HepG2 (cell line): ENCODE measurements at regions of chr15 and their contacts with region 1.

Region 1: DNA sequence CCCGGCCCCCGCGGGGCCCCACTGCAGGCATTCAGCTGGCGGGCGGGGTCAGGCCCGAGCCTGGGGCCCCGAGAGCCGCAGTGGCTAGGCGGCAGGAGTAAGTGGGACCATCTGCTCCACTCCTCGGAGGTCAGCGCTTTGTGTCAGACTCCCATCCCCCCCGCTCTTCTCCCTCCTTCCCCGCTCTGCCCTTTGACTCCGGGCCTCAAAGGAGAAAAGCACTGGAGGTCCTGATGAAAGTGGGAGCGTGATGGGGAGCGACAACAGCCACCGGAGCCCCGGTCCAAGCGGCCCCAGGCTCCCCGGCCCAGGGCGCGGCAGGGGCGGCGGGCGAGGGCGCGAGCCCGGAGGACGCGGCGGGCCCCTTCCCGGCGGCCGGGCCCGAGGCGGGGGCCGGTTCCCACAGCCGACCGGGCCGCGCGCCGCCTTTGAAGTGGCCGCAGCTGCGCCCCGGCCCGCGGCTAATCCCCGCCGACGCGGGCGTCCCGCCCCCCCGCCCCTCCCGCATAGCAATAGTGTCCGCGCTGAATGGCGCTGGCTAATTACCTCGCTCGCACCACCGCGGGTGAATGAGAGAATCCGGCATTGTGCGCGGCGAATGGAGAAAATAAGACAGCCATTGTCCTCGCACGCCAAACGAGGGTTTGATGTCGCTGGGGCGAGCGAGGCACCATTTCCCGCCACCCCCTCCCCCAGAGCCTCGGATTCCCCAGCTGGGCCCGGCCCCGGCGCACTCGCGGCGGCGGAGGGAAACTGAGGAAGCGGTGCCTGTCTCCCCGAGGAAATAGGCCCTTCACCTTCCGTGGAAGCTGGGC is 22.4 kb downstream of the IGDCC3 start:
- DNase-seq: peak; percentile 29
- ATAC-seq: peak; percentile 81
- H3K4me3 ChIP-seq: peak overlapping the region; percentile 56 to 75 (median 57)
- H3K27ac ChIP-seq: peak overlapping the region; percentile 62
- H3K4me1 ChIP-seq: peaks cover 21% of the 10 kb centered on the region
- H3K27me3 ChIP-seq: no peaks in the 10 kb centered on the region
- CTCF ChIP-seq: no peak
- EP300 ChIP-seq: no peak
- POLR2A ChIP-seq: no peak
- RAD21 ChIP-seq: no peak

Region 2: GRCh38 chr15:65264863-65265430 is 90.4 kb before region 1 on chr15:
- CTCF ChIA-PET with region 1: no interaction called
- POLR2A ChIA-PET with region 1: no interaction called
- in situ Hi-C with region 1: no loop called
- intact Hi-C with region 1: no loop called
- DNase-seq: no peak
- ATAC-seq: no peak
- H3K4me3 ChIP-seq: no peak overlapping the region
- H3K27ac ChIP-seq: no peak overlapping the region
- H3K4me1 ChIP-seq: no peaks in the 10 kb centered on the region
- H3K27me3 ChIP-seq: no peaks in the 10 kb centered on the region
- CTCF ChIP-seq: no peak
- EP300 ChIP-seq: no peak
- POLR2A ChIP-seq: no peak
- RAD21 ChIP-seq: no peak

Region 3: DNA sequence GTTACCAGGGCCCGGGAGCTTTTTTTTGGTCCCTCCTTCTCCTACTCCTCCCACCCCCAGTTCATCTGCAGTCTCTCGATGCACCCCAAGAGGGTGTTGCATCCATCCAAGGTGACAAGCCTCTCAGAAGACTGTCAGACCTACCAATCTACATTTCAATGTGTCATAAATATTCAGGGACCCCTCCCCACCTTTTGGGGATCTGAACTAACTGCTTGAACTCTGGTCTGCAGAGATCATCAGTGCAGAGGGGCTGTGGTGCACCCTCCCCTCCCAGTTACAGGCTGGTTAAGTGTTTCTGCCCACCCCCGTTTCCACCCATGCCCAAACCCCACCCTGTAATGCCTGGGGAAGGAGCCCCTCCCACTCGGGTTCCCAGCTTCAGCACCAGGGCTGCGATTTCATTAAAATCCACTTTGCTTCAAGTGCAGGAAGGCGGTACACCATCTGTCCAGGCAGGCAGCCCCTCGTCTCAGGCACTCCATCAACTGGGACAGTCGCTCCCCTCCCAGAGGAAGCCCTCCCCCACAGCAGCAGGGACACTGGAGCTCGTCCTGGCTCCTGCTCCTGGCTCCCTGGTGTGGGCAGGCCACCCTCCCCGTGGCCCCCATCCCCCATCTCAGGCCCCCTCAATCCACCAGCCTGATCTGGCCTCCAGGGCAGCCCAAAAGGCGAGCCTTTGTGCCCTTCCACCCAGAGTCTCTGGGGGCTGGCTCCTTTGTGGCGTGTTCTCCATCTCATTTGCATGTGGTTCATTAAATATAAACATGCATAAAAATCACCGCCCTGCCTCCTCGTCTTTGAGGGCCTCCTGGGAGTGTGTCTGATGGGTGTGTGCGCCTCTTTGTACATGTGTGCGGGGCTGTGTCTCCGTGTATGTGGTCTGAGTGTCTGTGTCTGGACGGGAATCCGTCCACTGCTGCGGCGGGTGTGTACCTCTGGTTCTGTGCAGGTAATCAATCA is 18.6 kb before region 1 on chr15:
- CTCF ChIA-PET with region 1: no interaction called
- POLR2A ChIA-PET with region 1: no interaction called
- in situ Hi-C with region 1: no loop called
- intact Hi-C with region 1: no loop called
- DNase-seq: no peak
- ATAC-seq: no peak
- H3K4me3 ChIP-seq: no peak overlapping the region
- H3K27ac ChIP-seq: no peak overlapping the region
- H3K4me1 ChIP-seq: peaks cover 18% of the 10 kb centered on the region
- H3K27me3 ChIP-seq: no peaks in the 10 kb centered on the region
- CTCF ChIP-seq: no peak
- EP300 ChIP-seq: no peak
- POLR2A ChIP-seq: no peak
- RAD21 ChIP-seq: no peak

Region 4: GRCh38 chr15:65377104-65377975 is 22.0 kb after region 1 on chr15:
- CTCF ChIA-PET with region 1: no interaction called
- POLR2A ChIA-PET with region 1: interaction called, 12 read pairs
- in situ Hi-C with region 1: no loop called
- intact Hi-C with region 1: loop called (anchors 2 kb)
- DNase-seq: no peak
- ATAC-seq: peak; percentile 65
- H3K4me3 ChIP-seq: peak overlapping the region; percentile 84 to 97 (median 92)
- H3K27ac ChIP-seq: peak overlapping the region; percentile 99
- H3K4me1 ChIP-seq: peaks cover 66% of the 10 kb centered on the region
- H3K27me3 ChIP-seq: no peaks in the 10 kb centered on the region; a peak in 1 of 5 replicates
- CTCF ChIP-seq: peak; percentile 7; the same call in 1 of the 2 replicates
- EP300 ChIP-seq: no peak
- POLR2A ChIP-seq: peak in 1 of 2 experiments; percentile 16; a peak in 1 of 4 replicates
- RAD21 ChIP-seq: no peak; the same call in 1 of the 2 replicates

Region 5: GRCh38 chr15:65421360-65422070 is 66.1 kb after region 1 on chr15:
- CTCF ChIA-PET with region 1: no interaction called
- POLR2A ChIA-PET with region 1: no interaction called
- in situ Hi-C with region 1: no loop called
- intact Hi-C with region 1: no loop called
- DNase-seq: no peak
- ATAC-seq: peak; percentile 56
- H3K4me3 ChIP-seq: peak overlapping the region; percentile 57 to 73 (median 58)
- H3K27ac ChIP-seq: no peak overlapping the region
- H3K4me1 ChIP-seq: peaks cover 38% of the 10 kb centered on the region
- H3K27me3 ChIP-seq: peaks cover 14 to 59% of the 10 kb centered on the region in 2 experiments
- CTCF ChIP-seq: no peak
- EP300 ChIP-seq: no peak
- POLR2A ChIP-seq: no peak
- RAD21 ChIP-seq: no peak